GM12878 (cell line): ENCODE measurements at regions of chr17 and their contacts with region 1.

Region 1: DNA sequence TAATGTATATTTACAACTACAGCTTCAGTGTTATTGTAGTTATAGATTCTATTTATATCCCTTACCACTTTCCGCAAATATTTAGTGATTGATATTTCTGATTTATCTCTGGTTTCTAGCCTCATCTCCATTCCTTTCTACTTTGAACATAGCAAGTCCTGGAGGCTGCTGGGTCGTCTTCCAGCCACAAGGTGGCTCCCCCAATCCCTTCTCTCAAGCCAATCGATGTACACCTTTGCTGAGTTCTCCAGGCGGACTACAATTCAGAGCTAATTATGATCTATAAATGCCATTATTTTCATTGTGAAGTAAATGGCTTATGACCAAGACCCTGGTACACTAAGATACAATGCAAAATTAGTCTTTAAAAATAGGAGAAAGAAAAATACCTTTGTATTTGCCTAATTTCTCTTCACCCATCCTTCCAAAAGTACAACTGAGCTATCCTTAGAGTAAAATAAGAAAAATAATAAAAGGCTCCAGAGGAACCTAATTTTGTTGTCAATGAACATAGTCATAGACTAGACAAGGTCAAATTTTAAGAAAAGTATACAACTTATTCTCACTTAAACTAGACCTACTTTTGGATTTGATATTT is 122.1 kb downstream of the SKAP1 start:
- DNase-seq: no peak
- ATAC-seq: peak; percentile 98
- H3K4me3 ChIP-seq: no peak overlapping the region
- H3K27ac ChIP-seq: no peak overlapping the region
- H3K4me1 ChIP-seq: peaks cover 8% of the 10 kb centered on the region; the same call in 1 of the 2 replicates
- H3K27me3 ChIP-seq: no peaks in the 10 kb centered on the region
- CTCF ChIP-seq: peak; percentile 69 to 89 (median 86)
- EP300 ChIP-seq: no peak
- POLR2A ChIP-seq: no peak
- RAD21 ChIP-seq: peak; percentile 66

Region 2: DNA sequence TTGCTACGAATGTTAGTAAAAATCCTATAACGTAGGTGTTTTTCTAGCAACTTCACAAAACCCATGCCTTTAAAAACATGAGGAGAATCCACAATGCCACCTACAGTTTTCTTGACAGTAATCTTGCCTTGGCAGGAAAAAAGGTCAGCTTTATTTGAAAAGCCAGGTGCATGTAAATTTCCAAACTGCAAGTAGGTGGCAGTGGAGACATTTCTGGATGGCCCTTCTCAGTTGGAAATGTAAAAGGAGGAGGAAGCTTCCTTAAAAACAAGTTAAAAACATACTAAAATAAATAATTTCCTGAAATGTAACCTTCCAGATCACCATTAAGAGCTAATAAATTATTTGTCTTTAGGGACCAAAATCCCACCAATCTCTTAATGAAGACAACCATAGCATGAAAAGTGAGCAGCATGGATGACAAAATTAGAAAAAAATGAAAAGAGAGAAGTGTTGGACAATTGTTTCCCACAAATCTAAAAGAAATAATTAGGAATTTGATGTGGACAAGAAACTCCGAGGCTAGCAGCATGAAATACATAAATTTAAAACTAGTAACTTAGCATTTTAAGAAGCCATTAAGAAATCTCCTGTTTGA is 48.1 kb before region 1 on chr17:
- CTCF ChIA-PET with region 1: interaction called, 190 read pairs
- POLR2A ChIA-PET with region 1: interaction called, 3 read pairs
- RAD21 ChIA-PET with region 1: interaction called, 23 read pairs
- SMC1A ChIA-PET with region 1: interaction called, 48 read pairs
- in situ Hi-C with region 1: no loop called
- intact Hi-C with region 1: loop called (anchors 5 kb)
- DNase-seq: no peak
- ATAC-seq: no peak
- H3K4me3 ChIP-seq: no peak overlapping the region
- H3K27ac ChIP-seq: no peak overlapping the region
- H3K4me1 ChIP-seq: no peaks in the 10 kb centered on the region
- H3K27me3 ChIP-seq: no peaks in the 10 kb centered on the region
- CTCF ChIP-seq: peak; percentile 47 to 62 (median 61)
- EP300 ChIP-seq: no peak
- POLR2A ChIP-seq: no peak
- RAD21 ChIP-seq: peak; percentile 77

Region 3: DNA sequence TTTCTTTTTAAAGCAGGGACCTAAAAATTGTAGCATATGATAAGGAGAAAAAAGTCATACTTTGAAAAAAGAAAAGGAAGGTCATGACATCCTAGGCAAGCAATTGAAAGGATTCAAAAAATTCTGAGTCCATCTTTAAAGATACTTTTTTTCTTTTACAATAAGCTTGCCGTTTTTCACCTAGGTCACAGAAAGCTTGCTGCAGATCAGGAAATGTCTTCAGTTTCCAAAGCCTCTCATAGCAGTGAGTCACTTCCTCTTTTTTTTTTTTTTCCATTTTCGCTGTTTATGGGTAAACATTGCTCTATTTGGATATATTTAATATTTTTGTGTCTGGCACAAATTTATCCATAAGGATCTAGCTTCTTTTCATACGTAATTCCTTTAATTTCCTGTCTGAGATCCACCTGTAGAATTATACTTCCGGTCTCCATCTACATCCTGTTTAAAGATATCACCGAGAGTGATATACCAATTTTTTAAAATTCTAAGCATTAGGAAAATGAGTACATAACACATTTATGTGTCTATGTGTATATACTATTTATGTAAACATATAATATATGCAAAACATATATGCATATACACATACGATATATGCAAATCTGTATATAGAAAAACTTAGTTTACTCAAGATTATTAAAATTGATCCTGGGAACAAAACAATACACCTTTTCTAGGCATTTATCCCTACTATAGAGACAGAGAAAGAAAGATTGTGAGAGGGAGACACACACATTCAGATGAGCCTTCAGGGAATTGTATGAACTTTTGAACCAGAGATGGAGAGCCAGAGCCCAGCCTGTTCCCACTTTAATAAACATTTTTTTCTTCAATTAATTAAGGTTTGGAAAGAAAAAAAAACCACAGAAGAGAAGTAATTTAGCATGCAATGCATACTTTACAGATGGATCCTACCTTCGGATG is 12.3 kb before region 1 on chr17:
- CTCF ChIA-PET with region 1: interaction called, 41 read pairs
- POLR2A ChIA-PET with region 1: interaction called, 11 read pairs
- RAD21 ChIA-PET with region 1: interaction called, 6 read pairs
- SMC1A ChIA-PET with region 1: interaction called, 38 read pairs
- in situ Hi-C with region 1: no loop called
- intact Hi-C with region 1: no loop called
- DNase-seq: peak; percentile 47
- ATAC-seq: peak; percentile 77
- H3K4me3 ChIP-seq: peak overlapping the region; percentile 20
- H3K27ac ChIP-seq: peak overlapping the region; percentile 95
- H3K4me1 ChIP-seq: peaks cover 48% of the 10 kb centered on the region
- H3K27me3 ChIP-seq: no peaks in the 10 kb centered on the region
- CTCF ChIP-seq: no peak
- EP300 ChIP-seq: peak in 1 of 2 experiments; percentile 24; a peak in 1 of 4 replicates
- POLR2A ChIP-seq: no peak
- RAD21 ChIP-seq: no peak

Region 4: GRCh38 chr17:48344246-48344645 is 36.3 kb after region 1 on chr17:
- CTCF ChIA-PET with region 1: interaction called, 26 read pairs
- POLR2A ChIA-PET with region 1: no interaction called
- RAD21 ChIA-PET with region 1: interaction called, 7 read pairs
- SMC1A ChIA-PET with region 1: interaction called, 10 read pairs
- in situ Hi-C with region 1: no loop called
- intact Hi-C with region 1: no loop called
- DNase-seq: no peak
- ATAC-seq: no peak
- H3K4me3 ChIP-seq: no peak overlapping the region
- H3K27ac ChIP-seq: no peak overlapping the region
- H3K4me1 ChIP-seq: no peaks in the 10 kb centered on the region
- H3K27me3 ChIP-seq: no peaks in the 10 kb centered on the region
- CTCF ChIP-seq: no peak
- EP300 ChIP-seq: no peak
- POLR2A ChIP-seq: no peak
- RAD21 ChIP-seq: no peak

Region 5: DNA sequence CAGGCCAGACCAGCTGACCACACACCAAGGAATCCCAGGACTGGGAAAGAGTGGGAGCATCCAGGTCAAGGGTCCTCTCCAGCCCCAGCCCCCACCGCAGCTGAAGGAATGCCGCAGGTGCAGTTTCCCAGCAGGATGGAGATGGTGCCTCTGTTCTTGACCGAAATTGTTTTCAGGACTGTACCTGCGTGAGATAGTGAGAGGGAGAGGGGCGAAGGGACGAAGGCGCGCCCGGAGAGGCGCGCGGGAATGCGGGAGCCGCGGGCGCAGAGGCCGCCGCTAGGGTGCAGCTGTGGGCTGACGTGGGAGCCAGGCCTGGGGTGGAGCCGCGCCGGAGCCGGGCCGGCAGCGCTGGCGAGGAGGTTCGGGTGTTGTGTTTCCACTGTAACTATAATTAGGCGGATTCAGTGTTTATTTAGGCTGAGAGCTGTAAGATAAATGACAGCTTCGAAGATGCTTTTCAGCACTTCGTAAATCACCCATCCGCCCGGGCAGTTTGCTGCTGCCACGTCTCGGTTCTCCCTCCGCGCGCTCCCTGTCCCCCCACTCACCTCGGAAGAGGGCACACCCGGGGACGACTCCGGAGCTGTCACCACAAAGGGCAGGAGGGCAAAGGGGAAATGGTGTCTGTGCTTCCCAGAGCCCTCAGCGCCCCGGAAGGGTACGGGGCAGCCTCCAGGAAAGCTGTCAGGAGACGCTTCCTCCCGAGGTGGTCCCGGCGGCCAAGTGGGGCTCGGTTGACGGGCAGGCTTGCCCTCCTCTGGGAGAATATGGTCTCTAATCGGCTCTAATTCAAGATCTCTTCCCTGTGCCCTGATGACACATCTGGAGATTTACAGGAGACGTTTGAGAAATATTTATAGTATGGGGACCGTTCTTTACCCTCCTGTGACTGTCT is 184.7 kb after region 1 on chr17:
- CTCF ChIA-PET with region 1: interaction called, 10 read pairs
- POLR2A ChIA-PET with region 1: no interaction called
- RAD21 ChIA-PET with region 1: no interaction called
- SMC1A ChIA-PET with region 1: no interaction called
- in situ Hi-C with region 1: no loop called
- intact Hi-C with region 1: no loop called
- DNase-seq: no peak
- ATAC-seq: peak; percentile 98
- H3K4me3 ChIP-seq: peak overlapping the region; percentile 51; the same call in 1 of the 2 replicates
- H3K27ac ChIP-seq: no peak overlapping the region
- H3K4me1 ChIP-seq: peaks cover 20% of the 10 kb centered on the region
- H3K27me3 ChIP-seq: no peaks in the 10 kb centered on the region
- CTCF ChIP-seq: peak; percentile 84 to 94 (median 90)
- EP300 ChIP-seq: no peak
- POLR2A ChIP-seq: no peak
- RAD21 ChIP-seq: peak; percentile 79

Region 6: DNA sequence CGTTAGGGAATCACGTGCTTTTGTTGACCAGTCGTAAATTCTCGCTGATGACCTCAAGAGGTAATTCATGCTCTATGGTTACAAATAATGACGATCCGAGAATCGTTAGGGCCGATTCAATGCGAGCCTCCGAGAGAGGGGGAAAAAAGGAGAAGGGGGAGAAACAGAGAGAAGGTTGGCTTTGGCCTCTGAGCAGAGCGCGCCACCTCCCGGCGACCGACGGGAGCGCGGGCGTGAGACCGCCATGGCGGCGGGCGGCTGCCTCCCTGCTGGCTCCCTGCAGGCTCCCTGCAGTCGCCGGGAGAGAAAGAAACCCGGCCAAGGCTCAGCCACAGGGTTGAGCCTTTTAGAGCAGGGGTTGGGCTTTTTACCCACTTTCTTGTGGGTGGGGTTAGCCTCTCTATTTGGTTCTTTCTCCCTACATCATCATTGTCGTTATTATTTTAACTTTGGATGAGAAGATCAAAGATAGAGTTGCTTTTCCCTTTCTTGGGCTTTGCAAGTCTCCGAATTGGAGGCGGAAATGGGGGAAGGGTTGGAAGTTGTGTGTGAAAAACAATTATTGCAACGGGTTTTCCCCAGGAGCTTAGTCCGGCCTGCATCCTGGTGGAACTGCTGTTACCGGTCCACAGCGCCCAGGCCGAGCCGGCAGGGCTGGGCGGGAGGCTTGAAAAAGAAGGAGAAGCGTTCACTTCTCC is 286.1 kb after region 1 on chr17:
- CTCF ChIA-PET with region 1: interaction called, 49 read pairs
- POLR2A ChIA-PET with region 1: interaction called, 3 read pairs
- RAD21 ChIA-PET with region 1: interaction called, 28 read pairs
- SMC1A ChIA-PET with region 1: interaction called, 34 read pairs
- in situ Hi-C with region 1: no loop called
- intact Hi-C with region 1: loop called (anchors 2 kb)
- DNase-seq: no peak
- ATAC-seq: peak; percentile 75
- H3K4me3 ChIP-seq: no peak overlapping the region; the same call in 1 of the 2 replicates
- H3K27ac ChIP-seq: no peak overlapping the region
- H3K4me1 ChIP-seq: peaks cover 10% of the 10 kb centered on the region
- H3K27me3 ChIP-seq: peaks cover 5 to 33% of the 10 kb centered on the region in 2 experiments
- CTCF ChIP-seq: peak; percentile 91 to 97 (median 94)
- EP300 ChIP-seq: no peak
- POLR2A ChIP-seq: no peak
- RAD21 ChIP-seq: peak; percentile 80